Activated CD4-positive, alpha-beta T cell treated with anti-CD3 and anti-CD28 coated beads, Interleukin-2, amount 10 ng/mL, durations not matched to agents 24 days and 14 days (primary cell): ENCODE measurements at regions of chr1 and their contacts with region 1.

Region 1: DNA sequence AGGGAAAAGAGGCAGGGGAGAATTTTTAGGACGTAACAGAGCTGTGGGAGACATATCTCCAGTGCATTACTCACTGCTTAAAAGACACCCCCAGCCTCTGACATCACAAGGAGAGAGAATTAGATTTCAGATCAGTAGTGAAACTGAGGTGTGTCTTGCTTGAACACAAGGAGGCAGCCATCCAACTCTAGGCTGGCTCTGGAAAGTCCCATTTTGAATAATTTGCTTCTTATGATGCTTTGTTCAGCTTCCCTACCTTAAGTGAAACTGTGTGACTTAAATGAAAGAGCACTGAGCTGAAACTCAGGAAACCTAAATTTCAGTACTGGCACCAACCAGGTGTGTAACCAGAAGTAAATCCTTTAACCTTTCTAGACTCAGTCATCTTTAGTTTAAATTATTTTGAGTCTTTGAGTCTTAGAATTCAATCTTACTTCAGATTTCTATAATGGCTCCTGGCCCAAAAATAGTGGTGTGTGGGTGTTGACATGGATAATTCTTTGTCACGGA is 251.6 kb upstream of the SGIP1 start:
- DNase-seq: peak; percentile 92
- H3K4me3 Mint-ChIP-seq: peak overlapping the region; percentile 32
- H3K27ac Mint-ChIP-seq: peak overlapping the region; percentile 74
- H3K4me1 Mint-ChIP-seq: peaks cover 69% of the 10 kb centered on the region
- H3K27me3 Mint-ChIP-seq: no peaks in the 10 kb centered on the region

Region 2: GRCh38 chr1:66242646-66243547 is 39.5 kb before region 1 on chr1:
- intact Hi-C with region 1: loop called (anchors 1 kb)
- DNase-seq: peak; percentile 93
- H3K4me3 Mint-ChIP-seq: no peak overlapping the region
- H3K27ac Mint-ChIP-seq: no peak overlapping the region
- H3K4me1 Mint-ChIP-seq: peaks cover 25% of the 10 kb centered on the region
- H3K27me3 Mint-ChIP-seq: peaks cover 6% of the 10 kb centered on the region

Region 3: GRCh38 chr1:66271216-66271903 is 11.0 kb before region 1 on chr1:
- intact Hi-C with region 1: loop called (anchors 1 kb)
- DNase-seq: peak; percentile 81
- H3K4me3 Mint-ChIP-seq: peak overlapping the region; percentile 67
- H3K27ac Mint-ChIP-seq: peak overlapping the region; percentile 88
- H3K4me1 Mint-ChIP-seq: peaks cover 62% of the 10 kb centered on the region
- H3K27me3 Mint-ChIP-seq: no peaks in the 10 kb centered on the region

Region 4: DNA sequence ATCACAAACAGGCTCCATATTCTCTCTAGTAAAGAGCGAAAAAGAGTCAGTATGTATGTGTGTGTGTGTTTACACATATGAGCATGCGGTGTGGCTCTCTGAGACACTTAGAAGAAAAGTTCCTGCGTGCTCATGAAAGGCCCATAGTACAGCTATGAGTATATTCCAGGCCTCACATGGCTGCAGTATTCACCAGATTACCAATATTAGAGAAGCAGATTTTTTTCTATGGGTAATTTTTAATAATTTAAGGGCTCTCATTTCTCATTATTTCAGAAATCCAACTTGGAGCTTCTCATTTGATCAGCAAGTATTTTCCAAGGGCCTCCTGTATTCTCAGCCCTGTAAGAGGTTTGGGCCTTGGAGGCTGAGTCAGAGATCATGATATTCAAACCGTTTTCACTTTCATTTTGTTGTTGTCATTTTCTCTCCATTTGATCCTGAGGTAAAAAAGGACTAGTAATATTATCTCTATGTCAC is 18.6 kb after region 1 on chr1:
- intact Hi-C with region 1: loop called (anchors 1 kb)
- DNase-seq: peak; percentile 80
- H3K4me3 Mint-ChIP-seq: peak overlapping the region; percentile 76
- H3K27ac Mint-ChIP-seq: peak overlapping the region; percentile 82
- H3K4me1 Mint-ChIP-seq: peaks cover 31% of the 10 kb centered on the region
- H3K27me3 Mint-ChIP-seq: no peaks in the 10 kb centered on the region

Region 5: GRCh38 chr1:66316464-66317247 is 34.3 kb after region 1 on chr1:
- intact Hi-C with region 1: no loop called
- DNase-seq: no peak
- H3K4me3 Mint-ChIP-seq: no peak overlapping the region
- H3K27ac Mint-ChIP-seq: peak overlapping the region; percentile 58
- H3K4me1 Mint-ChIP-seq: peaks cover 13% of the 10 kb centered on the region
- H3K27me3 Mint-ChIP-seq: no peaks in the 10 kb centered on the region

Region 6: GRCh38 chr1:66350001-66350547 is 67.7 kb after region 1 on chr1:
- intact Hi-C with region 1: loop called (anchors 1 kb)
- DNase-seq: peak; percentile 82
- H3K4me3 Mint-ChIP-seq: peak overlapping the region; percentile 80
- H3K27ac Mint-ChIP-seq: peak overlapping the region; percentile 90
- H3K4me1 Mint-ChIP-seq: peaks cover 72% of the 10 kb centered on the region
- H3K27me3 Mint-ChIP-seq: no peaks in the 10 kb centered on the region

Region 7: DNA sequence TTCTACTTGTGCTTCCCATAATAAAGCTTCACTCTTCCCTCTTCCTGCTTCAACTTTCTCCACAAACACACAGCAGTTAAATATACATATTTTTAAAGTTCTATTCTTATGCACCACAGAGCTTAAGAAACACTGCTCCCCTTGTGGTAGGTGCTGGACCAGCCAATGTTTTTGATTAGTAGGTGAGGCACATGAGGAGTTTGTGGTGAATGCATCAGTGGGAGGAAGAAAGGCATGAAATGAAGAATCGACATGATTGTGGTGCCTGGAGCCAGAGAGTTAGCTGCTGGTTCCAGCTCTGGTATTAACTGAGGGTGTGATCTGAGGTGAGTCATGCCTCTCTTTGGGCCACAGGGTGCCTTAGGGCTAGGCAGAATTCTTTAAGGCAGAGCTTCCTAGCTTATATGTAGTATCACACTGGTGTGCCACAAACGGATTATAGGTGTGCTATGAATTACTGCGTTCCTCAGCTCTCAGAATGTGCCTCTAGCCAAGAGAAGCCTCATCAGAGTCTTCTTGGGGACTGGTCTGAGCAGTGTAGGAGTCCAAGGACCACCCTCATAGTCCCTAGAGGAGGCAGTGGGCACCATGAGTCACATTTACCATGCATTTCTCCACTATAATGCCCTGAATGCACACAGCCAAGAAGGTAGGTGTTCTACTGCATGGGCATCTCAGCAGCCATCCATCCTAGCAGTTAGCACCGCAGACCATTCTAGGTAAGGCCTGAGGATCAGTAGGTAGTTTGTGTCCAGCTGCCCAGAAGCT is 154.2 kb after region 1 on chr1:
- intact Hi-C with region 1: loop called (anchors 1 kb)
- DNase-seq: peak; percentile 80
- H3K4me3 Mint-ChIP-seq: no peak overlapping the region
- H3K27ac Mint-ChIP-seq: peak overlapping the region; percentile 7
- H3K4me1 Mint-ChIP-seq: peaks cover 33% of the 10 kb centered on the region
- H3K27me3 Mint-ChIP-seq: no peaks in the 10 kb centered on the region

Region 8: GRCh38 chr1:67174716-67175284 is 892.4 kb after region 1 on chr1:
- intact Hi-C with region 1: loop called (anchors 10 kb)
- DNase-seq: no peak
- H3K4me3 Mint-ChIP-seq: peak overlapping the region; percentile 42
- H3K27ac Mint-ChIP-seq: peak overlapping the region; percentile 95
- H3K4me1 Mint-ChIP-seq: peaks cover 48% of the 10 kb centered on the region
- H3K27me3 Mint-ChIP-seq: no peaks in the 10 kb centered on the region